HepG2 (cell line): ENCODE measurements at regions of chr13 and their contacts with region 1.

Region 1: DNA sequence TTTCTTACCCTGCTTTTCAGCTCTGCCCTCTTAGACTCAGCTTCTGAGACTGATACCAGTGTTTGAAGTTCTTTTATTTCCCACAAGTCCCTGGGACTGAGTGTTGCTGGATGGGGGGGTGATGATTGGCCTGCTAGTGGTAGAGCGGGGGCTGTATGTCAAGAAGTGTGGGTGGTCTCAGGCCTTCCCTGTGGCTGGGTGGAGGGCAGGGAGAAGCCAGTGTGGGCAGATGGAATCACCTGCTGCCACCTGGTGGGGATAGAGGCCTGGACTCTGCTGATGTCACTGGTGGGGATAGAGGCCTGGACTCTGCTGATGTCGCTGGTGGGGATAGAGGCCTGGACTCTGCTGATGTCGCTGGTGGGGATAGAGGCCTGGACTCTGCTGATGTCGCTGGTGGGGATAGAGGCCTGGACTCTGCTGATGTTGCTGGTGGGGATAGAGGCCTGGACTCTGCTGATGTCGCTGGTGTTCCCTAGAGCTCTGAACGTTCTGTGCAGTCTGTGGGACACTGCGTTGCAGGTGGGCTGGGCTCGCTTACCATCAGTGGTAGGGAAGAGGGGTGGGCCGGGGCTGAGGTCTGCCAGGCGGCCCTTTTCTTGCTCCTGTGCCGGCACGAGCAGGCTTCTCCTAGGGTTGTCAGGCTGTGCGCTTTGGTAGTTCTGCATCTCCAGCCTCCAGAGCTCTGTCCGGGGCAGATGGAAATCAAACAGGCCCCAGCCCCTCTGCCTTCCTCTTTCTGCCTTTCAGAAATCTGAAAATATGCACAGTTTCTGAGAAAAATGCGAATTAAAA is 101.3 kb downstream of the ARHGEF7 start:
- DNase-seq: peak; percentile 29
- ATAC-seq: peak; percentile 97
- H3K4me3 ChIP-seq: no peak overlapping the region
- H3K27ac ChIP-seq: no peak overlapping the region
- H3K4me1 ChIP-seq: no peaks in the 10 kb centered on the region
- H3K27me3 ChIP-seq: no peaks in the 10 kb centered on the region
- CTCF ChIP-seq: peak; percentile 81
- EP300 ChIP-seq: no peak
- POLR2A ChIP-seq: no peak
- RAD21 ChIP-seq: peak; percentile 58

Region 2: GRCh38 chr13:110126391-110126961 is 1089.9 kb before region 1 on chr13:
- CTCF ChIA-PET with region 1: no interaction called
- POLR2A ChIA-PET with region 1: no interaction called
- in situ Hi-C with region 1: no loop called
- intact Hi-C with region 1: no loop called
- DNase-seq: no peak
- ATAC-seq: no peak
- H3K4me3 ChIP-seq: no peak overlapping the region
- H3K27ac ChIP-seq: no peak overlapping the region
- H3K4me1 ChIP-seq: no peaks in the 10 kb centered on the region
- H3K27me3 ChIP-seq: peaks cover 2 to 37% of the 10 kb centered on the region in 2 experiments; a peak in 2 of 5 replicates
- CTCF ChIP-seq: no peak
- EP300 ChIP-seq: no peak
- POLR2A ChIP-seq: no peak
- RAD21 ChIP-seq: no peak

Region 3: GRCh38 chr13:111066544-111066943 is 149.8 kb before region 1 on chr13:
- CTCF ChIA-PET with region 1: no interaction called
- POLR2A ChIA-PET with region 1: no interaction called
- in situ Hi-C with region 1: loop called (anchors 10 kb)
- intact Hi-C with region 1: loop called (anchors 1 kb)
- DNase-seq: no peak
- ATAC-seq: peak; percentile 19; the same call in 2 of the 3 replicates
- H3K4me3 ChIP-seq: no peak overlapping the region
- H3K27ac ChIP-seq: no peak overlapping the region
- H3K4me1 ChIP-seq: 0 out of 2 replicates have a peak, but pooled peaks cover 5% of the 10 kb centered on the region
- H3K27me3 ChIP-seq: peaks cover 3 to 27% of the 10 kb centered on the region in 2 experiments; a peak in 4 of 5 replicates
- CTCF ChIP-seq: no peak
- EP300 ChIP-seq: no peak
- POLR2A ChIP-seq: no peak
- RAD21 ChIP-seq: no peak